Activated B cell treated with CpG ODN at 0.5 μM for 24 hours (primary cell): ENCODE measurements at regions of chr16 and their contacts with region 1.

Region 1: DNA sequence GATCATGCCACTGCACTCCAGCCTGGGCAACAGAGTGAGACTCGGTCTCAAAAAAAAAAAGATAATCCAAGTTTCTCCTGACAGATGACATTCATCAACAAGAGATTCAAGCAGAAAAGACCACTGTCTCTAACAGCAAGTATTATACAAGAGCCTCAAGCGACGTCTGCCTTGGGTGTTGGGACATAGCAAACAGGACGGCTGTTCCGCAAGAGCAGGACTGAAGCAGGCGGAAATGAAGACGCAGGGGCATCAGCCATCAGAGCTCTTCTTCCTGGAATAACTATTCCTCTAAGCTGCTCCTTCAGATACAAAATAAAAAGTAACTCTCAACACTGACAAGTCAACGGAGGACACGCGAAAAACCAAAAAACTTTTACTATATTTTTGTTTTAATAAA is 54.0 kb downstream of the ANKRD11 start:
- DNase-seq: no peak
- ATAC-seq: no peak
- H3K4me3 Mint-ChIP-seq: no peak overlapping the region
- H3K27ac Mint-ChIP-seq: no peak overlapping the region
- H3K4me1 Mint-ChIP-seq: peaks cover 74% of the 10 kb centered on the region
- H3K27me3 Mint-ChIP-seq: no peaks in the 10 kb centered on the region
- CTCF ChIP-seq: no peak

Region 2: DNA sequence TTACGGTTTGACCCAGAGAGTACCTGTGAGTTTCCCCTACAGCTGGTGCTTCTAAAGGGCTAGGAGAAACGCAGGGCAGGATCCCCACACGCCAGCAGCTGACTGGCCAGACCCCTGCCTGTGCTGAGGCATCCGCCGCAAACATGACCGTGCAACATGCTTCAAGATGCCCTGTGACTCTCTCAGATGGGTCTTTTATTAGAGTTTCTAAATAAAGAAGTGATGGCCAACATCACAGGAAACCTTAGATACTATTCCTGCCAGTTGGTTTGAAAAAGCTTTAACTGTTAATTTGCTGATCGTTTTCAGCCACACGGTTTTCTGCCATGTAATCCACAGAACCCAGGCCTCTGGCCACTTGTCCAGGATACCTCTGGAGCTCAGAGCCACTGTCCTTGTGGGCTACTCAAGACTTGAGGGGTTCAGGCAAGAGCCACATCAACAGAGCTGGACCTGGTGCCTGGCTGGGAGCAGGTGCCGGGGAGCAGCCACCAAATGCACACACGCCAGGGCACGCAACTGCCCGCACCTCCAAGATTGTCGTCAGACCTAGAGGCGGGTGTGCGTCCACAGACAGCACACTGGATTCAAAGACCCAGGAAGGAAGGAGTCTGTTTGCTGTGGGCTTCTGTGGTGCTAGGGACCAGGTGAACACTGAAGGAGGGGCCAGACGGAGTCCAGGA is 100.4 kb before region 1 on chr16:
- CTCF ChIA-PET with region 1: no interaction called
- POLR2A ChIA-PET with region 1: interaction called, 16 read pairs
- intact Hi-C with region 1: no loop called
- DNase-seq: no peak
- ATAC-seq: no peak
- H3K4me3 Mint-ChIP-seq: no peak overlapping the region
- H3K27ac Mint-ChIP-seq: no peak overlapping the region
- H3K4me1 Mint-ChIP-seq: peaks cover 71% of the 10 kb centered on the region
- H3K27me3 Mint-ChIP-seq: no peaks in the 10 kb centered on the region
- CTCF ChIP-seq: no peak

Region 3: GRCh38 chr16:89453501-89454321 is 17.3 kb after region 1 on chr16:
- CTCF ChIA-PET with region 1: no interaction called
- POLR2A ChIA-PET with region 1: interaction called, 3 read pairs
- intact Hi-C with region 1: loop called (anchors 2 kb)
- DNase-seq: no peak
- ATAC-seq: no peak
- H3K4me3 Mint-ChIP-seq: no peak overlapping the region
- H3K27ac Mint-ChIP-seq: peak overlapping the region; percentile 51
- H3K4me1 Mint-ChIP-seq: peaks cover 68% of the 10 kb centered on the region
- H3K27me3 Mint-ChIP-seq: no peaks in the 10 kb centered on the region
- CTCF ChIP-seq: no peak